ENCODE measurements at regions of chr11 and their contacts with region 1.

Region 1: DNA sequence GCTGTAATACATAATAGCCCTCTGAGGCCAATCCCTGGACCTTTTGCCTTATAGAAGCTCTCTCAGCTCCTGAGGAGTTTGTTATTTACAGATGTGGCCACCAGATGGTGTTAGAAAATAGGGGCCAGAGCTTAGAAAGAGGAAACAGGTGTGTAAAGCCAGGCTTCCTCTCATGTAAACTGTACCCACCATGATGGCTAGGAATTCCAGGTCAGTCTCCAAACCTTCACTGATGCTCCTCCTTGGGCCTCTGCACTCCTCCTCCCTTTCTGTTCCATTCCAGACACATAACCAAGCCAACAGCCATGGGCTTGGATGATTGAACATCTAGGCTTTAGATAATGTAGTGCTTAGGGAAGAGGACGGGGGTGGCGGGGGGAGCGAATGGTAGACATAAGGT is 39.7 kb downstream of the USP35 start:
- DNase-seq: peak; percentile 57
- ATAC-seq: no peak
- H3K4me3 Mint-ChIP-seq: no peak overlapping the region
- H3K27ac Mint-ChIP-seq: peak overlapping the region; percentile 8
- H3K4me1 Mint-ChIP-seq: peaks cover 49% of the 10 kb centered on the region
- H3K27me3 Mint-ChIP-seq: no peaks in the 10 kb centered on the region

Region 2: GRCh38 chr11:78202733-78203167 is 25.7 kb before region 1 on chr11:
- CTCF ChIA-PET with region 1: interaction called, 15 read pairs
- POLR2A ChIA-PET with region 1: interaction called, 3 read pairs
- DNase-seq: peak; percentile 72
- ATAC-seq: peak; percentile 91
- H3K4me3 Mint-ChIP-seq: peak overlapping the region; percentile 79
- H3K27ac Mint-ChIP-seq: peak overlapping the region; percentile 97
- H3K4me1 Mint-ChIP-seq: peaks cover 47% of the 10 kb centered on the region
- H3K27me3 Mint-ChIP-seq: no peaks in the 10 kb centered on the region

Region 3: GRCh38 chr11:78216571-78217287 is 11.7 kb before region 1 on chr11:
- CTCF ChIA-PET with region 1: interaction called, 13 read pairs
- POLR2A ChIA-PET with region 1: no interaction called
- DNase-seq: no peak
- ATAC-seq: no peak
- H3K4me3 Mint-ChIP-seq: no peak overlapping the region
- H3K27ac Mint-ChIP-seq: peak overlapping the region; percentile 16
- H3K4me1 Mint-ChIP-seq: peaks cover 10% of the 10 kb centered on the region
- H3K27me3 Mint-ChIP-seq: no peaks in the 10 kb centered on the region

Measured in activated CD8-positive, alpha-beta T cell treated with anti-CD3 and anti-CD28 coated beads, Interleukin-2, amount 10 ng/mL, durations not matched to agents 7 days and 5 days (primary cell).